Thyroid gland (tissue), 4 donors: ENCODE measurements at regions of chr4 and their contacts with region 1.

Region 1: GRCh38 chr4:185134307-185134869 is 8.7 kb upstream of the SLC25A4 start:
- DNase-seq: no peak
- H3K4me3 ChIP-seq: no peak overlapping the region
- H3K27ac ChIP-seq: no peak overlapping the region
- H3K4me1 ChIP-seq: no peaks in the 10 kb centered on the region
- H3K27me3 ChIP-seq: no peaks in the 10 kb centered on the region
- CTCF ChIP-seq: peak in 5 of 6 experiments; percentile 59 to 82 (median 71)
- POLR2A ChIP-seq: no peak

Region 2: DNA sequence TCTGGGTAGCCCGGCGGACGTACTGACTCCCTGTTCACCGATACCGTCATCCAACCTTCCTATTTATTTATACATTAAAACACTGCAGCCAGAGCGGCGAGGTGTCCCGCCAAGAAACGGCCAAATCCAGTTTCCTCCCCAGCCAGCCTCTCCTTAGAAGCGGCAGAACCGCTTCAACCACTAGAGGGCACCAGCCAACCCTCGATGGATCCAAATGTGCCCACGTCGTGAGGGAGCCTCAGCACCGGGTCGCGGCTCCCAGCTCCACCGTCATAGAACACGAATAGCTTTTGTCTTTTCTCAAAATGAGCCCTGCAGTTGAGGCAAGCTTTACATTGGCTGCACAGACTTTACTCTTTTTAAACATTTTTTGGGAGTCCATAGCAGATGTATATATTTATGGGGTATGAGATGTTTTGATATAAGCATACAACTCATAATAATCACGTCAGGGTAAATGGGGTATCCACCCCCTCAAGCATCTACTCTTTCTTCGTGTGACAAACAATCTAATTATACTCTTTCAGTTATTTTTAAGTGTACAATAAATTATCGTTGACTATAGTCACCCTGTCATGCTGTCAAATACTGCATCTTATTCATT is 129.1 kb before region 1 on chr4:
- intact Hi-C with region 1: loop called (anchors 10 kb)
- DNase-seq: peak; percentile 88 to 91
- H3K4me3 ChIP-seq: no peak overlapping the region
- H3K27ac ChIP-seq: peak overlapping the region; percentile 46 to 76 (median 60)
- H3K4me1 ChIP-seq: peaks cover 7 to 10% of the 10 kb centered on the region in 2 donors
- H3K27me3 ChIP-seq: no peaks in the 10 kb centered on the region
- CTCF ChIP-seq: peak; percentile 81 to 90 (median 86)
- POLR2A ChIP-seq: no peak

Region 3: DNA sequence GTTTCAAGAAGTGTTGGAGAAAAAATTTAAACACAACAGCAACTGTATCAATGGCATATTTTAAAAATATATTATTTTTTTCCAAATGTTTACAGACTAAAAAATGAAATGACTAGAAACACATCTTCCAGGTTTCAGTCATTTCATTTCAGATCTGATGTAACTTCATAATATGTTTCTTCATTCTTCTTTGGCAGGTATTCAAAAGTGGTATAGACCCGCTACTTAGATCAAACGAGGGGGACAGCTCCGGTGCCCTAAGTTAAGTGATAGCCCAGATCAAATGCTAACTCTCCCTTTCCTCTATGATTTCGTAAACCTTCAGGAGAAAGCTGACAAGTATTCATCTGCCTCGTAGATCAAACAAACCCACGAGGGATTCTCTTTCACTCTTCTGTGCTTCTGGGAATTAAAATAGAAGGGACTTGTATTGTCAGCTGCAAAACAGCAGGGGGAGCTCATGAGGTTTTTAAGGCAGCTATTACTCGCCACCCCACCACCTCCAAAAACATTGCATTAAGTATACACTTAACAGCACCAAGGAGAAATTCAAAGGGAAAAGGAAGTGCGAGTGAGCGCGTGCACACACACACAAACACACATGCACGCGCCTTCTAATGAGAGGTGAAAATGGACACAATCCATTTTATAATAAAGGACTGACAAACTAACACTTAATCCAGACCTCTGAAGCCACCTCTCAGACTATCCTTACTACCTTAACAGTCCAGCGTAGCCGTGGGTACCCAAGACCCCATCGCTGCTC is 94.7 kb before region 1 on chr4:
- intact Hi-C with region 1: loop called (anchors 10 kb)
- DNase-seq: peak; percentile 50 to 56
- H3K4me3 ChIP-seq: no peak overlapping the region
- H3K27ac ChIP-seq: no peak overlapping the region
- H3K4me1 ChIP-seq: peaks cover 0 to 5% of the 10 kb centered on the region in 2 donors
- H3K27me3 ChIP-seq: no peaks in the 10 kb centered on the region
- CTCF ChIP-seq: peak; percentile 55 to 91 (median 84)
- POLR2A ChIP-seq: no peak

Region 4: DNA sequence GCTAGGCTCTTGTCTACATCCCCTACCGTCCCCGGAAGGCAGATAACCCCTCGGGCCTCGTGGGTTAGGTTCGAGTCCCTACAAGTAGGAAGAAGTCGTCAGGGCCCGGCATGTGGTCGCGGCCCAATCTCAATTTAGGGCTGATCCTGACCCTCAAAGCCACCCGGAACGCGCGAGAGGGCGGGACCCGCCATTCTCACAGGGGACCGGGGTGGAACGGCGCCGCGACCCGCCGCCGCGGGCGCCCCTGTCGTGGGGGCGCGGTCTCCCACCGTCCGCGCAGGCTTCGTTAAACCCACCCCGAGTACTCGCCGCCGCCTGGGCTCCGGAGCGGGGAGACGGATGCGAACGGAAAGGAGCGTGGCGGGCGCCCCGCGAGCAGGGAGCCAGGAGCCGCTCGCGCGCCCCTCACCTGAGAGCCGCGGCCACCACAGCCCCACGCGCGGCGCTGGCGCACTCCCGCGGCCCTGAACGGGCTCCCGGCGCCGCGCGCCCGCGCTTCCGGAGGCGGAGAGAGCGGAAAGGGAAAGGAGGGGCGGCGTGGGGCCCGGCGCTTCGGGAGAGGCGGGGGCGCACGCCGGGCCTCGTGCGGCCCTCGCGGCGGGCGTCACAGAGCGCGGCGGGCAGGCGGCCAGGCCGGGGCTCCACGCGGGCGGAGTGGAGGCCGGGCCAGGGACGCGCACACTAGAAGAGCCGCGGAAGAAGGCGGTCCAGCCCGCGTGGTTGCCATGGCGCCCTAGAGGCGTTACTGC is 69.3 kb after region 1 on chr4 and contains the start of gene CFAP97:
- intact Hi-C with region 1: no loop called
- DNase-seq: peak; percentile 93 to 96
- H3K4me3 ChIP-seq: peak within 1 kb of the TSS; percentile 53 to 84 (median 70)
- H3K27ac ChIP-seq: peak within 1 kb of the TSS; percentile 98 to 99 (median 98)
- H3K4me1 ChIP-seq: peaks cover 16 to 29% of the 10 kb centered on the region in 2 donors
- H3K27me3 ChIP-seq: no peaks in the 10 kb centered on the region
- CTCF ChIP-seq: no peak
- POLR2A ChIP-seq: peak; percentile 42 to 89
- total RNA-seq, gene CFAP97: 44.5 to 63.3 (median 59.1) TPM